Transverse colon (tissue), 4 donors: ENCODE measurements at regions of chr11 and their contacts with region 1.

Region 1: GRCh38 chr11:92714111-92714510 is 255.3 kb upstream of the MTNR1B start:
- DNase-seq: no peak
- H3K4me3 ChIP-seq: no peak overlapping the region
- H3K27ac ChIP-seq: no peak overlapping the region
- H3K4me1 ChIP-seq: no peaks in the 10 kb centered on the region
- H3K27me3 ChIP-seq: no peaks in the 10 kb centered on the region
- CTCF ChIP-seq: no peak
- EP300 ChIP-seq: no peak
- POLR2A ChIP-seq: no peak

Region 2: GRCh38 chr11:92738276-92738675 is 24.2 kb after region 1 on chr11:
- in situ Hi-C with region 1: no loop called
- intact Hi-C with region 1: loop called (anchors 1 kb)
- DNase-seq: no peak
- H3K4me3 ChIP-seq: no peak overlapping the region
- H3K27ac ChIP-seq: no peak overlapping the region
- H3K4me1 ChIP-seq: no peaks in the 10 kb centered on the region
- H3K27me3 ChIP-seq: no peaks in the 10 kb centered on the region
- CTCF ChIP-seq: no peak
- EP300 ChIP-seq: no peak
- POLR2A ChIP-seq: no peak

Region 3: DNA sequence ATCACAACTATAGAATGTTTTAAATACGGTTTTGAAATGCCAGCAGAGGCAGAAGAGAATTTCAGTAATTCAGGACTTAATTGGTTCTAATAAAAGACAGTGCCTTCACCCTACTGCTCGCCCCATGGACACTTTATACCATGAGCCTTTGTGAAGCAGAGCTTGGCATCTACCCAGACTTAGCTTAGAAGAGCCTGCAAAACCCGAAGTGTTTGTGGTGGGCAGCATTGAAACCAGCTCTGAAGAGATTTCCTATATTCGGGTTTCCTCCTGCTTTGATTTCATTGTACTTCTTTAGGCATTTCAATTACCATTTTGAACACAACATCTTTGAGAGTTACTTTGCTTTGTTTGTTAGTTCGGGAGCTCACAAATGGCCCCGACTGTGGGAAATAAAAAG is 70.2 kb after region 1 on chr11:
- in situ Hi-C with region 1: no loop called
- intact Hi-C with region 1: no loop called
- DNase-seq: no peak
- H3K4me3 ChIP-seq: no peak overlapping the region
- H3K27ac ChIP-seq: no peak overlapping the region
- H3K4me1 ChIP-seq: no peaks in the 10 kb centered on the region
- H3K27me3 ChIP-seq: no peaks in the 10 kb centered on the region
- CTCF ChIP-seq: no peak
- EP300 ChIP-seq: no peak
- POLR2A ChIP-seq: no peak

Region 4: DNA sequence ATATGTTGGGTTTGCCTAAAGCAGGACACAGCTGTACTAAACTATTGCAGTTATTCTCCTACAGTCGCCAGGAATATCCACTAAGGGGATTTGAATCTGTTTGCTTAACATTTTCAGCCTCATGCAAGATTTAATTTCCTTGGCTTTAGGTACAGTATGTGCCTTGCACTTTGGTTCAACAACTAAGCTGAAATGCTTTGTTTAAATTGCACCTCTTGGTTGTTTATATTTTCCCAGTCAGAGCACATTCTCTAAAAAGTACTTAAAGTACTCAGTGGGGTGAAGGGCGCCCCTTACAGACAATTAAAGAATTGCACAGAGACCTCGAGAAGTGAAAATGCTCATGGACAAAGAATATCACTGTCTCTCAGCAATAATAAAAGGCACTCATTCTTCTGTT is 147.5 kb after region 1 on chr11:
- in situ Hi-C with region 1: no loop called
- intact Hi-C with region 1: no loop called
- DNase-seq: no peak
- H3K4me3 ChIP-seq: no peak overlapping the region
- H3K27ac ChIP-seq: no peak overlapping the region
- H3K4me1 ChIP-seq: peaks cover 0 to 20% (median 0%) of the 10 kb centered on the region in 4 donors
- H3K27me3 ChIP-seq: no peaks in the 10 kb centered on the region
- CTCF ChIP-seq: no peak
- EP300 ChIP-seq: no peak
- POLR2A ChIP-seq: no peak